Activated B cell treated with CpG ODN at 0.5 μM for 24 hours (primary cell): ENCODE measurements at regions of chr5 and their contacts with region 1.

Region 1: DNA sequence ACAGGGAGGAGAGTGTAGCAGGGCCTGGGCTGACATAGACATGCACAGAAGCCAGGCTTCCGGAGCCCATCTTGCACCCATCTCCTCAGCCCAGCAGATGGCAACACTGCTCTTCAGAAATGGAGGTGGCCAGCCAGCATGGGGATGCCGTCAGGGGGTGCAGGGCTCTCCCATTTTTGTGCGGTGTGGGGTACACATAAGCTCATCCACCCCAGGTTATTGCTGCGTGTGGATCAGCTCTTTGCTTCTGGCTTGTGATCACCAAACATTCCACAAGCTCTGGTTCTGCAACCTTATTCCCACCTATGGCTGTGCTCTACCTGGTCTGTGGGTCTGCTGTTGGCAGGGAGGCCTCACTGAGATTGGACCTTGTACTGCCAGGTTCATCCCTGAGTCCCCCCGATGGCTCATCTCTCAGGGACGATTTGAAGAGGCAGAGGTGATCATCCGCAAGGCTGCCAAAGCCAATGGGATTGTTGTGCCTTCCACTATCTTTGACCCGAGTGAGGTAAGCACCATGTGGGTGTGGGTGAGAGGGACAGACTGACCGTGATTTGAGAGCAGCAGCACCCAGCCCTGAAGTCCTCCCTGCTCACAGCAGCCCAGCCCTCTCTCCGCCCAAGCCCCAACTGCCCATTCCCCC is 17.3 kb downstream of the SLC22A5 start:
- DNase-seq: peak; percentile 62
- ATAC-seq: peak; percentile 92
- H3K4me3 Mint-ChIP-seq: no peak overlapping the region
- H3K27ac Mint-ChIP-seq: peak overlapping the region; percentile 39
- H3K4me1 Mint-ChIP-seq: peaks cover 21% of the 10 kb centered on the region
- H3K27me3 Mint-ChIP-seq: no peaks in the 10 kb centered on the region
- CTCF ChIP-seq: no peak

Region 2: DNA sequence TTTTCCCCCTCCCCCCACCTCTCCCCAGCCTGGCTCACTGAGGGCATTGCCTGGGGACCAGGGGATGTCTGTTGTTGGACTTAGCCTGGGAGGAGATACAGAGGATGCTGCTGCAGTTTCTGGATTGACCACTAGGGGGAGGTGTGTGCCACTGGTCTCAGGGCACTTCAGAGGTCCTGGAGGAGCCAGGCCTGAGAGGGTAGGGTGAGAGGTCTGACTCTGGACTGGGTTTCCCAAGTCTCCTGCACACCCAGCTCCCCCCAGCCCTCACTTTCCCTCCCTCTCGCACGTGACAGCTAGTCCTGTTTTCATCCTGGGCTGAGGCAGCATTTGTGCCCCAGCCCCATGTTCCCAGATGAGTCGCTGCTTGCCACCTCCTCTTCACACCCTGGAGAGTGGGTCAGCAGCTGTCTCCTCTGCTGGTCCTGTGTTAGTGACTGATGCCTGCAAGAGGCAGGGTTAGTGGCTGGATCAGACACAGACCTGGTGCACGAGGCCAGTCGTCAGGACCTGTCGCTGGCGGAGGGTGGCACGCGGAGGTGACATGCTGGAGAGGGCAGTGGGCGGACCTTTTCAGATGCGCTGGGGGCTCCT is 321.9 kb before region 1 on chr5:
- CTCF ChIA-PET with region 1: no interaction called
- POLR2A ChIA-PET with region 1: no interaction called
- intact Hi-C with region 1: loop called (anchors 1 kb)
- DNase-seq: peak; percentile 64
- ATAC-seq: peak; percentile 86
- H3K4me3 Mint-ChIP-seq: no peak overlapping the region
- H3K27ac Mint-ChIP-seq: no peak overlapping the region
- H3K4me1 Mint-ChIP-seq: peaks cover 8% of the 10 kb centered on the region
- H3K27me3 Mint-ChIP-seq: no peaks in the 10 kb centered on the region
- CTCF ChIP-seq: peak; percentile 35

Region 3: DNA sequence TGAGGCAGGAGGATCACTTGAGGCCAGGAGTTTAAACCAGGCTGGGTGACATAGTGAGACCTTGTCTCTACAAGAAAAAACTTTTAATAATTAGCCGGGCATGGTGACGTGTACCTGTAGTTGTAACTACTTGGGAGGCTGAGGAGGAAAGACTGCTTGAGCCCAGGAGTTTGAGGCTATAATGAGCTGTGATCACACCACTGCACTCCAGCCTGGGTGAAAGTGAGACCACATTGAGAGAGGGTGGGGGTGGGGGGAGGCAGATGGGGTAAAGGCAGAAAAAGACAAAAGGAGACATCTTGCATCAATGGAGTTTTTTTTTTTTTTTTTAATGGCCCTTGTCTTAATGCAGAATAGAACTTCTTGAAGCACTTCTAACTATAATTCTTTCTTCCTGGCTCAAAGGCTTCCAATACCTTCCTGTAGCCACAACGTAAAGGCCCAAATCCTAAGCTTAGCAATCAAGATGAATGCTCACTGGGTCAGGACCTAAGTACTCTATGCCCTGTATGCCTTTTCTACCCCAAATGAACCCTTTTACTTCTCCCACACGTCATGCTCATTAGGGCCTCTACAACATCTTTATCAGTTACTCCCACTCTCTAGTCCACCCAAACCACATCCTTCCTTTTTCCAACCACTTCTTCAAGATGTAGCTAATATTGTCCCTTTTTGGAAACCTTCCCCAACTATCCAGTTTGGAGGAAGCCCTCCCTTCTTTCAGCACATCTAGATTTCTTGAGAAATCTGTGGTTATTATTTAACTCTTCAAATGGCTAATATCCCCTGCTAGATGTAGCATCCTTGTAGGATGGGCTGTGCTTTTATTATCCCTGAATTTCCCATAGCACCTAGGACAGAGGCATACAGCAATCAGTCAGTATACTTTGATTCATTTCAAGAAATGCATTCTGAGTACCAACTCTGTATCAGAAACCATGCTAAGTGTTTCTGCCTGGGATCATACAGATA is 272.3 kb before region 1 on chr5:
- CTCF ChIA-PET with region 1: no interaction called
- POLR2A ChIA-PET with region 1: no interaction called
- intact Hi-C with region 1: no loop called
- DNase-seq: no peak
- ATAC-seq: no peak
- H3K4me3 Mint-ChIP-seq: no peak overlapping the region
- H3K27ac Mint-ChIP-seq: no peak overlapping the region
- H3K4me1 Mint-ChIP-seq: peaks cover 3% of the 10 kb centered on the region
- H3K27me3 Mint-ChIP-seq: no peaks in the 10 kb centered on the region
- CTCF ChIP-seq: no peak

Region 4: GRCh38 chr5:132272311-132273210 is 114.2 kb before region 1 on chr5:
- CTCF ChIA-PET with region 1: interaction called, 3 read pairs
- POLR2A ChIA-PET with region 1: no interaction called
- intact Hi-C with region 1: loop called (anchors 1 kb)
- DNase-seq: peak; percentile 66
- ATAC-seq: peak; percentile 51
- H3K4me3 Mint-ChIP-seq: peak overlapping the region; percentile 4
- H3K27ac Mint-ChIP-seq: no peak overlapping the region
- H3K4me1 Mint-ChIP-seq: peaks cover 12% of the 10 kb centered on the region
- H3K27me3 Mint-ChIP-seq: peaks cover 11% of the 10 kb centered on the region
- CTCF ChIP-seq: peak; percentile 96

Region 5: DNA sequence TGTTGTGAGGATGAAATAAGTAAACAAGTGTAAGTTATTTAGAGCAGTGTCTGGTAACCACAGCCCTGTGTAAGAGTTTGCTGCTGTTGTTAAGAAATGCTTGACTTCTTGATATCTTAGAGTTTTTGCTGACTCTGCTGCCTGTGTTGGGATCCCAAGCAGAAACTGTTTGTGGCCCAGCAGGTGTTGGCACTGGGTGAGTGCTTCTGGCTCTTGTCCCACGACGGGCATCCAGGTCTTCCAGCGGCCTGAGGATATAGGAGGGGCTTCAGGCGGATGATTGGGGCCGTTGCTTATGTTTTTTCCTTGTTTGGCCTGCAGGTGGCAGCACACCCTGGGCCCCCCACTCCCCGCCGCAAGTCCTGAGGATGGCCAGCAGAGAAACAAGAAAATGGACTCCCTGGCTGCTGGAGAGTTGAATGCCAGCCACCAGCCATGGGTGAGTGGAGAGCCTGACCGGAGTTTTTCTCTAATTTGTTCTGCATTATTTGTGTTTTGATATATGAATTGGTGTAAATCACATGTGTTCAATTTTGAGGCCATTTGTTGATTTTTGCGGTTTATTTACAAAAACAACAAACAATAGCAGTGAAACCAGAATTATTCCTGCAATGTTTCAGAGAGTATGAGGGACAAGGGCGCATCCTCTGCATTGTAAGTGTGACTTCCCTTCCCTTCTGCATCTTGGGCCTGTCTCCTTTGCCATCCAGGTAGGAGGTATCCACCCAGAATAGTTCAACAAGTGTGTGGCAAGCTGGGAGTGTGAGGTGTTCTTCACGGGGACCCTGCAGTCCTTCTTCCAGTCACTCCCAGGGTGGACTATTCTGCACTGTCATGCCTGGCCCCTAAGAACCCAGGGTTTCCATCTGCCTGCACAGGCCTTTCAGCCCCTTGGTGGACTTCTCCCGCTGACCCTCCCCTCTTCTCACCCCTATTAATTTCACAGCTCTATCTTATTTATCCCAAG is 33.0 kb after region 1 on chr5:
- CTCF ChIA-PET with region 1: interaction called, 11 read pairs
- POLR2A ChIA-PET with region 1: interaction called, 3 read pairs
- intact Hi-C with region 1: loop called (anchors 2 kb)
- DNase-seq: peak; percentile 62
- ATAC-seq: peak; percentile 35
- H3K4me3 Mint-ChIP-seq: peak overlapping the region; percentile 82
- H3K27ac Mint-ChIP-seq: peak overlapping the region; percentile 90
- H3K4me1 Mint-ChIP-seq: peaks cover 97% of the 10 kb centered on the region
- H3K27me3 Mint-ChIP-seq: no peaks in the 10 kb centered on the region
- CTCF ChIP-seq: peak; percentile 51

Region 6: GRCh38 chr5:132714456-132715307 is 327.9 kb after region 1 on chr5:
- CTCF ChIA-PET with region 1: interaction called, 3 read pairs
- POLR2A ChIA-PET with region 1: no interaction called
- intact Hi-C with region 1: loop called (anchors 1 kb)
- DNase-seq: no peak
- ATAC-seq: no peak
- H3K4me3 Mint-ChIP-seq: no peak overlapping the region
- H3K27ac Mint-ChIP-seq: no peak overlapping the region
- H3K4me1 Mint-ChIP-seq: no peaks in the 10 kb centered on the region
- H3K27me3 Mint-ChIP-seq: no peaks in the 10 kb centered on the region
- CTCF ChIP-seq: no peak

Region 7: GRCh38 chr5:132883261-132883834 is 496.6 kb after region 1 on chr5:
- CTCF ChIA-PET with region 1: interaction called, 5 read pairs
- POLR2A ChIA-PET with region 1: no interaction called
- intact Hi-C with region 1: loop called (anchors 1 kb)
- DNase-seq: no peak
- ATAC-seq: peak; percentile 72
- H3K4me3 Mint-ChIP-seq: no peak overlapping the region
- H3K27ac Mint-ChIP-seq: peak overlapping the region; percentile 53
- H3K4me1 Mint-ChIP-seq: peaks cover 12% of the 10 kb centered on the region
- H3K27me3 Mint-ChIP-seq: no peaks in the 10 kb centered on the region
- CTCF ChIP-seq: no peak